Right ventricle myocardium inferior (tissue), 1 donor: ENCODE measurements at regions of chr11 and their contacts with region 1.

Region 1: DNA sequence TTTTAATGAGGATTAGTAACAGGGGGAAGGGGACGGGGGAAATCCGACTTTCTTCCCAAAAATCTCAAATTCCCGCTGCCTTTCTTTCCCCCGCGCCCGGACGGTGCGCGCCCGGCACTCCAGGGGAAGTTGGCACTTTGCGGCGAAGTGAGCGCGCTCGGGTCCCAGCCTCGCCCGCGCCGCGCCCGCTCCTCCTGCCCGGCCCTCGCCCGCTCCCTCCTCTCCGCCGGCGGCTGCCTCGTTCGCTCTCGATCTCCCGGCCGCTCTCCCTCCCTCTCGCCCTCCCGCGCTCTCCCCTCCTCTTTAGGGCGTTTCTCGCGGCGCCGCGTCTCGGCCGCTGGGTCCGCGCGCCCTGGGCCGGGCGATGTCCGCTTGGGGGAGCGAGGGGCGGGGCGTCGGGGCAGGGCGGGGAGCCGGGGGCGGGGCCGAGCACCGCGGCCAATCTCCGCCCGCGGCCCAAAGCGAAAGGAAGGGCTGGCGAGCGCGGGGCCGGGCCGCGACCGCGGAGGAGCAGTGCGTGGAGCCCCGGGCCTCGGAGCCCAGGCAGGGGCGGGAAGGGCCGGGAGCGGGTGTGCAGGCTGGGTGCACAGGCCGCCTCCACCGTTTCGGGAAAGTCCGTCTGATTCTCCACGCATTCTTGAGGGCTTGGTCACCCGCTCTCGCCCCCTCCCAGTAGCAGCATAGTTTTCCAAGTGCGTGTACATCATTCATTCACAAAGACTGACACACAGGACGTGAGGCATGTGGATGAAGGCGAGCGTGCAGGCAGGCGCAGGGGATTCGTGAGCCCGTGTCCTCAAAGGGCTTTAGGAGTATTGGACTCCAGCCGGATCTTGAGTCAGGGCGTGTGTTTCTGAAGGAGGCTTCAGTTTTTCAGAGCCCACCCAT is 65.1 kb downstream of the ETS1 start:
- DNase-seq: peak; percentile 98
- ATAC-seq: peak; percentile 98

Region 2: DNA sequence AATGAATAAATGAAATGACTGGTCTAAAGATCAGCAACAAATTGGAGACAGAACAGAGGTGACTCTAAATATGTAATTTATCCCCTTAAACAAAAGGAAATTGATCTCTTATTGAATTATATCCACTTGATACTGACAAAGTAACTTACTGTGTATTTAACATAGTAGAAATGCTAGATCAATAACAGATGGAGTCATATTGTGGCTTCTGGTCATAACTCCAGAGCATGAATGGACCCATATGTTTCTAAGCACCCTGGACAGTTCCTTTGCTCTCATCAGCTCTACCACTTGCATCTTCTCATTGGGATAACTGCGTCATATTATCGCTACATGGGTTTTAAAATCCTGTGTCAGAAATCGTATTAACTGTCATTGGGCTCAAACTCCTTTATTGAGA is 157.3 kb before region 1 on chr11:
- intact Hi-C with region 1: no loop called
- DNase-seq: no peak
- ATAC-seq: no peak

Region 3: GRCh38 chr11:128422576-128423370 is 99.5 kb before region 1 on chr11:
- intact Hi-C with region 1: loop called (anchors 5 kb)
- DNase-seq: peak; percentile 75
- ATAC-seq: peak; percentile 58

Region 4: GRCh38 chr11:128481135-128481534 is 41.2 kb before region 1 on chr11:
- intact Hi-C with region 1: loop called (anchors 2 kb)
- DNase-seq: no peak
- ATAC-seq: peak; percentile 63

Region 5: GRCh38 chr11:128548655-128549255 is 26.5 kb after region 1 on chr11:
- intact Hi-C with region 1: loop called (anchors 1 kb)
- DNase-seq: peak; percentile 83
- ATAC-seq: peak; percentile 81

Region 6: GRCh38 chr11:128624269-128625175 is 102.2 kb after region 1 on chr11:
- intact Hi-C with region 1: loop called (anchors 5 kb)
- DNase-seq: no peak
- ATAC-seq: no peak